Activated CD4-positive, alpha-beta T cell treated with anti-CD3 and anti-CD28 coated beads for 36 hours (primary cell): ENCODE measurements at regions of chr11 and their contacts with region 1.

Region 1: GRCh38 chr11:45289369-45289768 is 3.2 kb upstream of the SYT13 start:
- DNase-seq: no peak
- ATAC-seq: no peak
- H3K4me3 Mint-ChIP-seq: no peak overlapping the region
- H3K27ac Mint-ChIP-seq: no peak overlapping the region
- H3K4me1 Mint-ChIP-seq: no peaks in the 10 kb centered on the region
- H3K27me3 Mint-ChIP-seq: peaks cover 59% of the 10 kb centered on the region

Region 2: GRCh38 chr11:45319077-45319476 is 29.7 kb after region 1 on chr11:
- CTCF ChIA-PET with region 1: no interaction called
- POLR2A ChIA-PET with region 1: no interaction called
- intact Hi-C with region 1: no loop called
- DNase-seq: peak; percentile 23
- ATAC-seq: peak; percentile 60
- H3K4me3 Mint-ChIP-seq: no peak overlapping the region
- H3K27ac Mint-ChIP-seq: no peak overlapping the region
- H3K4me1 Mint-ChIP-seq: no peaks in the 10 kb centered on the region
- H3K27me3 Mint-ChIP-seq: peaks cover 20% of the 10 kb centered on the region

Region 3: GRCh38 chr11:45332276-45332934 is 43.0 kb after region 1 on chr11:
- CTCF ChIA-PET with region 1: interaction called, 5 read pairs
- POLR2A ChIA-PET with region 1: no interaction called
- intact Hi-C with region 1: loop called in 1 of 2 experiments (anchors 1 kb)
- DNase-seq: peak; percentile 51
- ATAC-seq: peak; percentile 57
- H3K4me3 Mint-ChIP-seq: no peak overlapping the region
- H3K27ac Mint-ChIP-seq: no peak overlapping the region
- H3K4me1 Mint-ChIP-seq: no peaks in the 10 kb centered on the region
- H3K27me3 Mint-ChIP-seq: peaks cover 8% of the 10 kb centered on the region